Gastrocnemius medialis (tissue), 4 donors: ENCODE measurements at regions of chr19 and their contacts with region 1.

Region 1: GRCh38 chr19:33430674-33431277 is 57.3 kb downstream of the CEBPG start:
- DNase-seq: no peak
- ATAC-seq: peak in 1 of 2 donors; percentile 51
- H3K4me3 ChIP-seq: no peak overlapping the region
- H3K27ac ChIP-seq: no peak overlapping the region
- H3K4me1 ChIP-seq: no peaks in the 10 kb centered on the region
- H3K27me3 ChIP-seq: no peaks in the 10 kb centered on the region
- CTCF ChIP-seq: peak; percentile 38 to 76 (median 60)
- POLR2A ChIP-seq: no peak

Region 2: GRCh38 chr19:33763633-33764371 is 333.0 kb after region 1 on chr19:
- in situ Hi-C with region 1: loop called in 3 of 4 experiments (anchors 5 to 25 kb)
- intact Hi-C with region 1: no loop called
- DNase-seq: no peak
- ATAC-seq: no peak
- H3K4me3 ChIP-seq: no peak overlapping the region
- H3K27ac ChIP-seq: no peak overlapping the region
- H3K4me1 ChIP-seq: no peaks in the 10 kb centered on the region
- H3K27me3 ChIP-seq: no peaks in the 10 kb centered on the region
- CTCF ChIP-seq: no peak
- POLR2A ChIP-seq: no peak